ENCODE measurements at regions of chr10 and their contacts with region 1.

Region 1: DNA sequence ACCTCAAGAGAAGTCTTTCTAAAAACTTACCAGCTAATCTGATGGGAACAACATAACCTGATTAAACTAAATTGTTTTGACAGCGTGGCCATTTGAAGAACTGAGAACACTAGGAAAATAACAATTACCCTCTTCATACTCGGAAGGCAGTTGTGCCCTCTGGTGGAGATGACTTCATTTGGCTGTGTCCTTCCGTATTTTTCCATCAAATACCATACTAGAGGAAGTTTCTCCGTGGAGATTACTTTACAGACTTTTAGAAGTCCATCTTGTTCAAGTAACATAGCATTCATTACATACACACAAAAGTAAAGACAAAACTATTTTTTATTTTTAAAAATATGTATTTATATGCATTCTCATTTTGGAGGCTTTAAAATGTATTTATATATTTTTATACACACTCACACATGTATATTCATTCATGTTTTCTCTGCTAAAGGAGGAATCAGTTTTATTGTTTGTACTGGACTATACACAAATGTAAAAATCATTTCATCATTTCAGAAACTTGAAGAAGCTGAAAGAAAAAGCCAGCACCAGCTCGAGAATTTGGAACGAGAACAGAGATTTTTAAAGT is 25.2 kb downstream of the SMNDC1 start:
- DNase-seq: peak in 1 of 2 donors; percentile 56
- H3K4me3 ChIP-seq: no peak overlapping the region
- CTCF ChIP-seq: no peak
- POLR2A ChIP-seq: no peak

Region 2: GRCh38 chr10:110137142-110137545 is 142.4 kb before region 1 on chr10:
- intact Hi-C with region 1: loop called (anchors 5 kb)
- DNase-seq: no peak
- H3K4me3 ChIP-seq: no peak overlapping the region
- CTCF ChIP-seq: peak in 1 of 3 donors; percentile 69
- POLR2A ChIP-seq: no peak